Posterior cingulate gyrus (tissue), 11 donors: ENCODE measurements at regions of chrX and their contacts with region 1.

Region 1: GRCh38 chrX:154534862-154535670 is 11.6 kb downstream of the G6PD start:
- DNase-seq: peak; percentile 82 to 99 (median 92)

Region 2: GRCh38 chrX:154397819-154398724 is 137.0 kb before region 1 on chrX and contains the start of gene RPL10:
- intact Hi-C with region 1: loop called (anchors 5 kb)
- DNase-seq: peak; percentile 88 to 99 (median 91)